Sigmoid colon (tissue), 7 donors: ENCODE measurements at regions of chr2 and their contacts with region 1.

Region 1: DNA sequence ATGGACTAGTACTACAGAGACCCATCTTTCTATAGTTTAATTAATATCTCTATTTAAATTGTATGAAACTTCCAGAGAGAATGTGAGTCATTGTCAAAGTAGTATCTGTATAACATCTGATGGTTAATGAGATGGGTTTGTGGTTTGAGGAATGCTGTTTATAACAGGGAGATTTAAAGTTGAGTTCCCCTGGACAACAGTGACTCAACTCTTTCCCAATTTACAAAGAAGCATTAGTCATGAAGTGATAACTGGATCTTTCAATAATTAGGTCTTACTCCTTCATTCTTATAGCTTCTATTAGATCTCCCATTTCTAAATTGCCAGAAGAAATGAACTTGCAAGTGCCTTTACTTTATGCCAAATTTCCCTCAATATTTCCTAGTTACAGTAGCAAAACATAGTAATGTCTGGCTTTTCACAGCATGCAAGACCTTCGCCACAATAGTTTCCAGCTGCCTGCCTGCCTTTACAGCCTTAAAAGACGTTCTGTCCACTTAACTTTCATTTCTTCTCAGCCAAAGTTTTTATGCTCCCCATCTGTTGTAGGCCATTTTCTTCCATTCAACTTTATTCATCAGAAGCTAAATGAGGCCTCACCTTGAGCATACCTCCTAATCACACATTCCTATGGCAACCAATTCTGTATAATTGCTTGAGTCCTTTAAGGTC is 47.7 kb upstream of the WDR75 start:
- DNase-seq: no peak
- H3K4me3 ChIP-seq: no peak overlapping the region
- H3K27ac ChIP-seq: peak overlapping the region; percentile 51 to 80 (median 74)
- H3K4me1 ChIP-seq: peaks cover 0 to 34% (median 29%) of the 10 kb centered on the region in 4 donors
- H3K27me3 ChIP-seq: no peaks in the 10 kb centered on the region
- CTCF ChIP-seq: no peak
- EP300 ChIP-seq: peak in 3 of 4 donors; percentile 17 to 79 (median 63)
- POLR2A ChIP-seq: no peak

Region 2: DNA sequence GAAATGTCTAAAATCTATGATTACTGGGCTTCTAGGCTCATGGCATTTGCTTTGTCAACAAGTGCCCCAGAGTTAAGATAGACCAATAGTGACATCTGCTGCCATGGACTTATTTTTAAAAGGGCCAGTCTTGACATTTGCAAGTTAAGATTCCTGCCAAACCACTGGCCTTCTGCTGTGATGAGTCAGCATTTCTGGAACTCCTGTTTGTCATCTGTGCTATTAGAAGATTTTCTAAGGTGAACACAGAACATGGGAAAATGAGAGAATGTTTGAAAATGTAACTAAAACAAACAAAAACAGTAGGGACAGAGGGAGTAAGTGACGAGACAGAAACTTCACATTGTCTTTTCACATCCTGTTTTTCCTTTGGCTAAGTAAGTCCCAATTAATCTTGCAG is 46.0 kb before region 1 on chr2:
- intact Hi-C with region 1: loop called (anchors 5 kb)
- DNase-seq: no peak
- H3K4me3 ChIP-seq: no peak overlapping the region
- H3K27ac ChIP-seq: peak overlapping the region; percentile 46 to 78 (median 70)
- H3K4me1 ChIP-seq: peaks cover 0 to 62% (median 49%) of the 10 kb centered on the region in 4 donors
- H3K27me3 ChIP-seq: no peaks in the 10 kb centered on the region
- CTCF ChIP-seq: no peak
- EP300 ChIP-seq: no peak
- POLR2A ChIP-seq: no peak